Pancreas (tissue), 10 donors: ENCODE measurements at regions of chr3 and their contacts with region 1.

Region 1: GRCh38 chr3:136752422-136753325 is 496 bp upstream of the STAG1 start:
- DNase-seq: peak; percentile 98 to 100 (median 99)
- ATAC-seq: peak; percentile 87 to 95 (median 91)
- H3K4me3 ChIP-seq: peak overlapping the region; percentile 36 to 84 (median 75)
- H3K27ac ChIP-seq: peak overlapping the region; percentile 96 to 99 (median 97)
- H3K4me1 ChIP-seq: peaks cover 15 to 26% (median 15%) of the 10 kb centered on the region in 3 donors
- H3K27me3 ChIP-seq: no peaks in the 10 kb centered on the region
- CTCF ChIP-seq: peak in 2 of 4 donors; percentile 0 to 90

Region 2: GRCh38 chr3:136396916-136397315 is 355.8 kb before region 1 on chr3:
- intact Hi-C with region 1: loop called in 1 of 3 experiments (anchors 10 kb)
- DNase-seq: no peak
- ATAC-seq: no peak
- H3K4me3 ChIP-seq: no peak overlapping the region
- H3K27ac ChIP-seq: no peak overlapping the region
- H3K4me1 ChIP-seq: peaks cover 0 to 2% (median 0%) of the 10 kb centered on the region in 3 donors
- H3K27me3 ChIP-seq: no peaks in the 10 kb centered on the region
- CTCF ChIP-seq: no peak